Spleen (tissue), 13 donors: ENCODE measurements at regions of chr4 and their contacts with region 1.

Region 1: DNA sequence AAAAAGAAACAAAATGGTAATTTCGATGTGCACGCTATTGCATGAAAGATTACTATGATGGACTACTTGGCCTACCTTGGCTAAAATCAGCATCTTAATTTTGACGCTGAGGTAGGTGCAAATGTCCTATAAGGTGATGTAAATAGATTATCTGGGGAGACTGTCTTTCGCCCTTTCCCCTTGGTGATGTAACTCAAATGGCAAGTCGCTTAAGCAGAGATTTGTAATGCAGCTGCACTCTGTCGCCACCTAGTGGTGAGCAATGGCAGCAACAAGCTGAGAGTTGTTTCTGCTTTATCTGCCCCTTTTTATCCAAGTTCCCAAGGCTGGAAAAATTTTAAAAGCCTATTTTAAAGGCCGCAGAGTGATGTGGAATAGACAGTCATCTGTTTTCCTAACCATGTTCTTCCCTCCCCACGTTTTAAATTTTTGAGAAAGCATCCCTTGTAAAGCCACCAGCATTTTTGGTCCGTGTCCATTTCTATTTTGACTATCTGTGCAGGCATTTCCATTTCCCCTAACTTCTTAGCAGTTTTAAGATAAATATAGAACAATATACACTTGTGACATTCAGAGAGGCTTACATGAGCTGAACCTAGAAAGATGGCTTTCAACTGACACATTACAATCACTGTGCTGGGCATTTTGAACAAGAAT is 62.4 kb upstream of the PDLIM3 start:
- DNase-seq: peak; percentile 87
- H3K4me3 ChIP-seq: no peak overlapping the region
- H3K27ac ChIP-seq: peak overlapping the region in 3 of 8 donors; percentile 5 to 31 (median 27)
- H3K4me1 ChIP-seq: peaks cover 0 to 12% (median 4%) of the 10 kb centered on the region in 6 donors
- H3K27me3 ChIP-seq: peaks cover 0 to 26% (median 0%) of the 10 kb centered on the region in 7 donors
- CTCF ChIP-seq: peak; percentile 74 to 96 (median 90)
- POLR2A ChIP-seq: no peak

Region 2: GRCh38 chr4:185238215-185238681 is 359.4 kb before region 1 on chr4:
- intact Hi-C with region 1: no loop called
- DNase-seq: no peak
- H3K4me3 ChIP-seq: no peak overlapping the region
- H3K27ac ChIP-seq: no peak overlapping the region
- H3K4me1 ChIP-seq: peaks cover 0 to 14% (median 5%) of the 10 kb centered on the region in 6 donors
- H3K27me3 ChIP-seq: no peaks in the 10 kb centered on the region
- CTCF ChIP-seq: no peak
- POLR2A ChIP-seq: no peak

Region 3: DNA sequence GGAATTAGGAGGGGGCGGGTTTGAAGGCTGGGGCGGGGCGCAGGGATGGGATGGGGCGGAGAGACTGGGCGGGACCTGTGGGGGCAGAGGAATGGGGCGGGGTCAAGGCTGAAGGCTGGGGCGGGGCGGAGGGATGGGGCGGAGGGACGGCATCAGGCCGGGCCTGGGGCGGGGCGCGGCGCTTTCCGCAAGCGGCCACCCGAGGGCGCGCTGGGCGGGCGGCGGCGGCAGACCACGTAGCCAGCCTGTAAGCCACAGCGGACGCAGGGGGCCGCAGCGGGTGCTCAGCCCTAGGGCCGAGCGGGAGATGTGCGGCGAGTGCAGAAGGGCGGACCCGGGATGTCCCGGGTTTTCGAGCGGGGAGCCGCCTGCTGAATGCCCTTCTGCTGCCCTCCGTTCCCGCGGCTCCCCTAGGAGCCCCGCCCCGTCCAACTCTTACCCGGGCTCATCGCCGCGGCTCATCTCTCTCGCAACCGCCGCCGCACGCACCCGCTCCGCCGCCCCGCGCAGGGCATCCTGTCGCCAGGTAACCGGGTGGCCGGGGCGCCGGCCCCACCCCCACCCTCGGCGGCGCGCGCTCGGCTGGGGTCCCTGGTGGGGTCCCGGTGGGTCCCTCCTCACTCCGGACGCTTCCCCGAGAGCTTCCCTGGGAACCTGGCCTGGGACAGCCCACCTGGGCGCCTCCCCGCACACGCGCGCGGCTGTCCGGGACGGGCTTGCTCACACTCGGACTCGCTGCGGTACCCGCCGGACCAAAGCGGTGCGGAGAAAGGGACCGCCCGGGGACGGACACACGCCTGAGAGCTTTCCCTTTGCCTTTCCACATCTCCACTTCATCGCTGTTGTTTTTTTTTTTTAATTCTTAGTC is 126.2 kb before region 1 on chr4 and contains the start of gene CCDC110:
- intact Hi-C with region 1: loop called (anchors 5 kb)
- DNase-seq: peak; percentile 96
- H3K4me3 ChIP-seq: peak within 1 kb of the TSS; percentile 56 to 87 (median 76)
- H3K27ac ChIP-seq: peak within 1 kb of the TSS in 7 of 8 donors; percentile 59 to 82 (median 75)
- H3K4me1 ChIP-seq: peaks cover 5 to 24% (median 19%) of the 10 kb centered on the region in 6 donors
- H3K27me3 ChIP-seq: peaks cover 0 to 27% (median 0%) of the 10 kb centered on the region in 7 donors
- CTCF ChIP-seq: peak; percentile 19 to 87 (median 80)
- POLR2A ChIP-seq: no peak
- total RNA-seq, gene CCDC110: 0.60 to 4.7 (median 0.87) TPM